Activated naive CD4-positive, alpha-beta T cell treated with anti-CD3 and anti-CD28 coated beads for 36 hours (primary cell): ENCODE measurements at regions of chr9 and their contacts with region 1.

Region 1: GRCh38 chr9:36407122-36407723 is 7.2 kb upstream of the RNF38 start:
- DNase-seq: peak; percentile 77
- H3K4me3 Mint-ChIP-seq: no peak overlapping the region
- H3K27ac Mint-ChIP-seq: peak overlapping the region; percentile 30
- H3K4me1 Mint-ChIP-seq: peaks cover 8% of the 10 kb centered on the region
- H3K27me3 Mint-ChIP-seq: no peaks in the 10 kb centered on the region

Region 2: DNA sequence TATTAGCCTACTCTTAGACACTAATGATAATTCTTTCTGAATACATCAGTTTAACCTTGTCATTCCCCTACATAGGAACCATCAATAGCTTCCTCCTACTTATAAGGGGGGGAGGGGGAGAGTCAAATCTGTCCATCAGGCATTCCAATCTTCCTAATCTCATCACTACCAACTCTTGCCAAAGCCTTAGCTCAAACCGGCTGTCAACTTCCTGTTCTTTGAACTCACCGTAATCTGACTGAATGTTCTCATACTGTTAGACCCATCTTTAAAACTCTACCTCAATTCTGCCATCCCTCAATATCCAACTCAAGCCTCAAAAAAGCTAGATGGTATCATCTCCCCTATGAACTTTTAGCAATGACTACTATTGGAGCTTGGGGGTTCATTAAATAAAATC is 34.7 kb after region 1 on chr9:
- CTCF ChIA-PET with region 1: interaction called, 25 read pairs
- intact Hi-C with region 1: no loop called
- DNase-seq: no peak
- H3K4me3 Mint-ChIP-seq: no peak overlapping the region
- H3K27ac Mint-ChIP-seq: no peak overlapping the region
- H3K4me1 Mint-ChIP-seq: peaks cover 58% of the 10 kb centered on the region
- H3K27me3 Mint-ChIP-seq: no peaks in the 10 kb centered on the region

Region 3: DNA sequence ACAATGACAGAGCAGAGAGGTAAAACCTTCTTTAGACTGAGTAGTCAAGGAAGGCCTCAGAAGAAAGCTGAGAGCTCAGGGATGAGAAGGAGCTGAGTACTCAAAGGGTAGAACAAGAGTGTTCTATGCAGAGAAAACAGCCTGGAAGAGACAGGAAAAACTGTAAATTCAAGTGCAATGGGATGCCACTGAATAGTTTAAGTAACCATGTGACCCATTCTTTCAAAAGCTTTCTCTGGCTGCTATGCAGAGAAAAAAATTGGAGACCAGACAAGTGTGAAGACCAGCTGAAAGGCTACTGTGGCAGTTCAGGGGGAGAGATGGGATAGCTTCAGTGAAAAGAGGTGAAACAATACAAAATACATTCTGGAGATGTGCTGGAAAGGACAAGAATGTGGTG is 54.1 kb after region 1 on chr9:
- CTCF ChIA-PET with region 1: interaction called, 10 read pairs
- intact Hi-C with region 1: no loop called
- DNase-seq: no peak
- H3K4me3 Mint-ChIP-seq: no peak overlapping the region
- H3K27ac Mint-ChIP-seq: no peak overlapping the region
- H3K4me1 Mint-ChIP-seq: peaks cover 46% of the 10 kb centered on the region
- H3K27me3 Mint-ChIP-seq: no peaks in the 10 kb centered on the region

Region 4: GRCh38 chr9:36499174-36499890 is 92.1 kb after region 1 on chr9:
- CTCF ChIA-PET with region 1: interaction called, 4 read pairs
- intact Hi-C with region 1: loop called (anchors 5 kb)
- DNase-seq: no peak
- H3K4me3 Mint-ChIP-seq: no peak overlapping the region
- H3K27ac Mint-ChIP-seq: no peak overlapping the region
- H3K4me1 Mint-ChIP-seq: peaks cover 39% of the 10 kb centered on the region
- H3K27me3 Mint-ChIP-seq: no peaks in the 10 kb centered on the region

Region 5: DNA sequence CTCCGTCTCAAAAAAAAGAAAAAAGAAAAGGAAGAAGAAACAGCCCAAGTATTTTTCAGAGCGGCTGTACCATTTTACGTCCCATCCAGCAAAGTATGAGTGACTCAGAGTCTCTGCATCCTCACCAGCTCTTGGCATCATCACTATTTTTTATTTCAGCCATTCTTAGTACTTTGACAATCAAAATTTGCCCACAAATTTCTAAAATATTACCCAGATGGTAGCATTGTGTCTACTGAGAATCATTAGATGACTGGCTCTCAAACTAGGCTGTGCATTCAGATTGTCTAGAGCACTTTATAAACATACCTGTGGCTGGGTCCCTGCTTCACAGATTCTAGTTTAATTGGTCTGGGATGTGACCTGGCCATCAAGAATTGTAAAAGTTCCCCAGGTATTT is 143.9 kb after region 1 on chr9:
- CTCF ChIA-PET with region 1: interaction called, 238 read pairs
- intact Hi-C with region 1: loop called (anchors 1 kb)
- DNase-seq: no peak
- H3K4me3 Mint-ChIP-seq: no peak overlapping the region
- H3K27ac Mint-ChIP-seq: no peak overlapping the region
- H3K4me1 Mint-ChIP-seq: peaks cover 1% of the 10 kb centered on the region
- H3K27me3 Mint-ChIP-seq: no peaks in the 10 kb centered on the region

Region 6: GRCh38 chr9:36728651-36729520 is 321.7 kb after region 1 on chr9:
- CTCF ChIA-PET with region 1: interaction called, 21 read pairs
- intact Hi-C with region 1: loop called (anchors 1 kb)
- DNase-seq: peak; percentile 83
- H3K4me3 Mint-ChIP-seq: no peak overlapping the region
- H3K27ac Mint-ChIP-seq: no peak overlapping the region
- H3K4me1 Mint-ChIP-seq: no peaks in the 10 kb centered on the region
- H3K27me3 Mint-ChIP-seq: no peaks in the 10 kb centered on the region

Region 7: DNA sequence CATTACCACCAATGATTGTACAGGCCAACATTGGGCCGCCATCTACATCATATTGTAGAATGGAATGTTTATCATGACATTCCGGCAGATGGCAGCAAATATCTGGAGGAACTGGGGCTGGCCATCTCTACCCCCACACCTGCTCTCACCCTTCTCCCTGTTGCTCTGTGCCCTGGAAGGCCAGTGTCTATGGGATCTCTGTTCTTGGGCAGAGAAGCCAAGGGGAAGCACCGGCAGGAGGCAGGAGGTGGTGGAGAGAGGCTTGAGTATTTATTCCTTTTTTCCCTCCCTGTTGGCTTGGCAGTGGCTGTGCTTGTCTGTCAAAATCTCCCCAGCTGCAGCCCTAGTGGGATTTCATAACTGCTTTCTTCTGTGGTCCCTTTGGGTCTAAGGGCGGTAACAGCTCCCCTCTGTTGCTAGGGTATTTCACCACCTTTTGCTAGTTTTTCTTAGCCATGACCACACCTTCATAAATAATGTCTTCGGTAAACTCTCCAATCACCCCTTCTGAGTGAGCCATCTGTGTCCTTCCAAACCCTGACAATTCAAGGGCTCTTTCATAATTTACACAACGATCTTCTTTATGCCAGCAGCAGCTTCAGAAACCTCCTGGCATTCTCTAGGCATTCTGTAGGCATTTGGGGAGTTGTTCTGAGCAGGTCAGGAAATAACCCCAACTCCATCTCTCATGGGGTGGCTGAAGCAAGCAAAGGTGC is 391.3 kb after region 1 on chr9:
- CTCF ChIA-PET with region 1: no interaction called
- intact Hi-C with region 1: no loop called
- DNase-seq: no peak
- H3K4me3 Mint-ChIP-seq: no peak overlapping the region
- H3K27ac Mint-ChIP-seq: no peak overlapping the region
- H3K4me1 Mint-ChIP-seq: no peaks in the 10 kb centered on the region
- H3K27me3 Mint-ChIP-seq: no peaks in the 10 kb centered on the region

Region 8: DNA sequence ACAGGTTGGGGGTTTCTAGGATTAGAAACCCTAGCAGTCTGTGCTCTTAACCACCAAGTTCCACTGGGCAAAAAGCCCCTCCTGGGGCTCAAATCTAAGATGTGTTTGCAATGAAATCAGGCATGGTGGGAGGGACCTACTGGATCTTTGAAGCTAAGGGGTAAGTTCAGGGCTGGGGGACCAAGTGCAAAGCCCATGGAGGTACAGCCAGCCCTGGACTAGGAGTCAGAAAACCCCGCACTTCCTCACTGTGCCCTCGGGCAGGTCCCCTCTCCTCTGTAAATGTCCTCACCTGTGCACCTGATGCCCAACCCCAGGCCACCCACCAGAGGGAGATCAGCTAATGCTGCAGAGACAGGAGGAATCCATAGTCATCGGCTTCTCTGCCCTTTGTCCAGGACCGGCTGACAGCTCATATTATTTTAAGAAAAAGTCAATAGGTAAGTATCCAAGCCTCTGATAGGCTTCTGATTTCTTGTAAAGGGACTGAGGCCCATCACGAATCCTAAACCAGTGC is 488.6 kb after region 1 on chr9:
- CTCF ChIA-PET with region 1: no interaction called
- intact Hi-C with region 1: no loop called
- DNase-seq: no peak
- H3K4me3 Mint-ChIP-seq: no peak overlapping the region
- H3K27ac Mint-ChIP-seq: no peak overlapping the region
- H3K4me1 Mint-ChIP-seq: no peaks in the 10 kb centered on the region
- H3K27me3 Mint-ChIP-seq: no peaks in the 10 kb centered on the region